Activated CD4-positive, alpha-beta memory T cell treated with anti-CD3 and anti-CD28 coated beads, Interleukin-2, amount 10 ng/mL, durations not matched to agents 7 days and 5 days (primary cell): ENCODE measurements at regions of chrX and their contacts with region 1.

Region 1: GRCh38 chrX:51336584-51336983 is 4.0 kb downstream of the NUDT10 start:
- DNase-seq: peak; percentile 17
- H3K4me3 Mint-ChIP-seq: no peak overlapping the region
- H3K27ac Mint-ChIP-seq: no peak overlapping the region
- H3K4me1 Mint-ChIP-seq: no peaks in the 10 kb centered on the region
- H3K27me3 Mint-ChIP-seq: peaks cover 3% of the 10 kb centered on the region

Region 2: DNA sequence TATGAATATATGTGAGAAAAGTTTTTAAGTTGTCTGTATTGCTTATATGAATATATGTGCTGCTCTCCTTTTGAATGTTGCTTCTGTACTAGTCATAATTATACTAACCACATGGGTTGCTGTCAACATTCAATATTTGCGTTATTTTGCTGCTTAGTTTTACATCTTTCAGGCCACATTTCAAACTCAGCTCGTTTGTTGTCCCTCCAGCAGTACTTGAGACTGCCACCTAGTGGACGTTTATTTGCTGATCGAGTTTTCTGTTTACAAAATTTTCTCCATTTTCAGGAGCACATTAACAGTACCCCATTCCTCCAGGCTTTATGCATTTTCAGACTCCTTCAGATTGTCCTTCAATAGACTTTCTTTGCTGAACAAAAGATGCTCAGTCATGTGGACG is 84.0 kb after region 1 on chrX:
- CTCF ChIA-PET with region 1: interaction called, 26 read pairs
- POLR2A ChIA-PET with region 1: no interaction called
- DNase-seq: no peak
- H3K4me3 Mint-ChIP-seq: no peak overlapping the region
- H3K27ac Mint-ChIP-seq: no peak overlapping the region
- H3K4me1 Mint-ChIP-seq: no peaks in the 10 kb centered on the region
- H3K27me3 Mint-ChIP-seq: no peaks in the 10 kb centered on the region

Region 3: DNA sequence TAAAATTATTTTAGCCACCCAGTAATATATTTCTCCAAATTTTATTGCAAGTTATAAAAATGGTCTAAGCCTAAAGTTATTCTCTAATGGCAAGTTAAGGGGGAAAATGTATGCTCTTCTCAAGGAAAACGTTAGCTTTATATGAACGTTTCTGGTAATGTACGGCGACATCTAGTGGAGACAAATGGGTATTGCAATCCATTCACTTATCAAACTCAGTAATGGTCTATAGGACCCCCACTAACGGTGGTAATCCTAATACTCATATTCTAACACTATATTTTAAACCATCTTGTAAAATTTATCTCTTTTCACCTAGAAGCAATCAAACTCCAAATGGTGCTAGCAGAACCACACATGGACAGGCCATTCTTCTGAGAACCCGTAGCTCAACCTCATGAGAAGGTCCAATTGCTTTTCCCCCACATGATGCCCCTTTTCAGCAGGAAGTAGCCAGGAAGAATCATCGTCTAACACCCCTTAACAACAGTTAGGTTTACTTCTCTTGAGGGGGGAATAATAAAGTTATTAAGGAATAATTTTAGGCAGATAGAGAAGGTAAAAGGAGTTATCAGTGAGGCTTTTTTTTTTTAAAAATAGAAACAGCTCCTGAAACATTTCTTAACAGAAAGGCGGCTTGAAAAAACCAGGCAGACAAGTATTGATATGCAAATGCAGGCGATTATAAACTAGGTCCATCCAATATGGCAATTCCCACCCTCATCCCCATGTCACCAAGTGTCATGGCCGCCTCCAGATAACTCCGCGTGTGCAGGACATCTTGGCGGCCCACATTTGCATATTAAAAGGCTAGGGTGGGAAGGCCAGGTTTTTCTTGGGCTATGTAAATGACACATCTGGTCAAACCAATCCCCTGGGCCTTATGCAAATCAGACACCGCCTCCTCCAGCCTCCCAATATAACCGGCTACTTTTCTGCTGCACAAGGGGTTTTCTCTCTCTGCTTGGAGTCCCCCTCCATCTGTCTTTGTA is 124.8 kb after region 1 on chrX:
- CTCF ChIA-PET with region 1: interaction called, 17 read pairs
- POLR2A ChIA-PET with region 1: no interaction called
- DNase-seq: no peak
- H3K4me3 Mint-ChIP-seq: no peak overlapping the region
- H3K27ac Mint-ChIP-seq: no peak overlapping the region
- H3K4me1 Mint-ChIP-seq: no peaks in the 10 kb centered on the region
- H3K27me3 Mint-ChIP-seq: no peaks in the 10 kb centered on the region